ENCODE measurements at regions of chr6 and their contacts with region 1.

Region 1: DNA sequence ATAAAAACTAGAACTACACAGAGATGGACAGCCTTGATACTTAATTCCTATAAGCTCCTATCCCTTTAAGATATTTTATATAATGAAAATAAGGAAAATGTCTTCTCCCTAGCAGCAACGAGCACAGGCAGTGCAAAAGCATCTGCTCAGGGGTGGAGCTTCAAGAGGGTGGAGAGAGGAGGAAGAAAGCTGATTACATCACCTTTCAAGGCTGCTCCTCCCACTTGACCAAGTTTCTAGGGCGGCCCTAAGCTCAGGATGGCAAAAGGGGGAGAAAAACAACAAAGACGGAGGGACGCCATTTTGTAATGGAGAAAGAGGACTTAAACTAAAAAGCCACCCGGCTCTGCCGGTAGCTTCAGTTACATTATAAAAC is 2.2 kb downstream of the PPP1R10 start:
- DNase-seq: peak; percentile 76 to 95
- ATAC-seq: peak; percentile 68 to 76
- H3K4me3 ChIP-seq: peak overlapping the region; percentile 88
- H3K27ac ChIP-seq: peak overlapping the region; percentile 90 to 97
- H3K4me1 ChIP-seq: peaks cover 39% of the 10 kb centered on the region
- CTCF ChIP-seq: no peak
- EP300 ChIP-seq: no peak
- POLR2A ChIP-seq: 0 out of 2 replicates have a peak, but pooled peaks have one; percentile 35
- RAD21 ChIP-seq: no peak

Region 2: DNA sequence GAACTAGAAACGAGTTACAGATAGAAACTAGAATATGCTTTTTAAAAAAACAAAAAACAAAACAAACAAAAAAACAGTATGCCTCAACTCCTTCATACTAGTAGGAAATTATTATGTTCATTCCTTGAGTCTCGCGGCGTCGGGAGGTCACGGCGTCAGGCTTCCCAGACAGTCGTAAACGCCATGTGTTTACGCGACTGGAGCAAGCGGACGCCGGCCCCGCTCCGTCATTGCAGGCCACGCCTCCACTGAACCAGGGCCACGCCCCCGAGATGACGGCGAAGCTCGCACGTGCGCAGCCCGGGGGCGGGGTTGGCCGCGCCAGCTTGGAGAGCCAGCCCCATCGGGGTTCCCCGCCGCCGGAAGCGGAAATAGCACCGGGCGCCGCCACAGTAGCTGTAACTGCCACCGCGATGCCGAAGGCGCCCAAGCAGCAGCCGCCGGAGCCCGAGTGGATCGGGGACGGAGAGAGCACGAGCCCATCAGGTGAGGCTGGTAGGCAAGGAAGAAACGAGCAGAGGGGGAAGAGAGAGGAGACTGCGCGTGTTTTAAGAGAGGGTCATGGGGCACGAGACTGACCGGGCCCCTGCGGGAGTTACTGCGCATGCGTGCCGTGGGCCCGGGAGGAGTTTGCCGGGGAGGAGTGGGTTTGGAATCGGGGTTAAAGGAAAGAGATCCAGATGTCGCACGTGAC is 43.6 kb before region 1 on chr6 and contains the start of gene ABCF1:
- CTCF ChIA-PET with region 1: no interaction called
- POLR2A ChIA-PET with region 1: interaction called, 15 read pairs
- DNase-seq: peak; percentile 89 to 96
- ATAC-seq: peak; percentile 95 to 97
- H3K4me3 ChIP-seq: peak within 1 kb of the TSS; percentile 52
- H3K27ac ChIP-seq: peak within 1 kb of the TSS; percentile 89 to 99
- H3K4me1 ChIP-seq: peaks cover 14% of the 10 kb centered on the region
- CTCF ChIP-seq: no peak
- EP300 ChIP-seq: no peak
- POLR2A ChIP-seq: peak; percentile 67
- RAD21 ChIP-seq: no peak
- polyA plus RNA-seq, gene ABCF1: 30.2 and 31.0 TPM in 2 replicates

Region 3: DNA sequence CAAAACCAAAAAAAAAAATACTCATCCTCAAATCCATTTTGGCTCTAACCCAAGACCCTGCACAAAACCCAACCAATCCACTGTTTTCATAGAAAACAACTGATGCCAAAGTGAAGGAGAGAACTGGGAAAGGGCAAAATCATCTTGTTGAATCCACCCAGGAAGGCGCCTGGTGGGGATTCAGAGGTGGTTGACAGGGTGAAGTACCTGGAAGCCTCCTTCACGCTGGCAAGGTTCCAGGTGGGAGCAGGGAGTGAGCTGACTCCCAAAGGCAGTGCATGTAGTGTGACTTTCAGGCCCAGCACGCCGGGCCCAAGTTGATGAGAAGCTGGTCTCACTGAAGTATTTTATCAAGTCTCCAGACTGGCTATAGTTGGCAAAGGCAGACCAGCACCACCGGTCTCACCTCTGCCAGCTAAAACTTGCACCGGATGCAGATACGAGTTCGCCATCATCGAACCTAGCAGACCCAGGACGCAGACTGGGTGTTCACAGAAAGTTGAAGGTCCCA is 14.3 kb before region 1 on chr6:
- CTCF ChIA-PET with region 1: interaction called, 16 read pairs
- POLR2A ChIA-PET with region 1: interaction called, 10 read pairs
- DNase-seq: peak in 1 of 2 experiments; percentile 26
- ATAC-seq: no peak
- H3K4me3 ChIP-seq: no peak overlapping the region
- H3K27ac ChIP-seq: no peak overlapping the region
- H3K4me1 ChIP-seq: no peaks in the 10 kb centered on the region
- CTCF ChIP-seq: no peak
- EP300 ChIP-seq: no peak
- POLR2A ChIP-seq: no peak
- RAD21 ChIP-seq: no peak

Region 4: GRCh38 chr6:30769088-30769852 is 154.4 kb after region 1 on chr6:
- CTCF ChIA-PET with region 1: no interaction called
- POLR2A ChIA-PET with region 1: no interaction called
- DNase-seq: peak; percentile 93 to 94
- ATAC-seq: peak; percentile 91 to 95
- H3K4me3 ChIP-seq: peak overlapping the region; percentile 3; the same call in 1 of the 3 replicates
- H3K27ac ChIP-seq: peak overlapping the region; percentile 89 to 97
- H3K4me1 ChIP-seq: peaks cover 70% of the 10 kb centered on the region
- CTCF ChIP-seq: no peak
- EP300 ChIP-seq: peak; percentile 68 to 81; a peak in 3 of 5 replicates
- POLR2A ChIP-seq: no peak
- RAD21 ChIP-seq: peak; percentile 13 to 34; a peak in 2 of 5 replicates